HepG2 (cell line): ENCODE measurements at regions of chr4 and their contacts with region 1.

Region 1: GRCh38 chr4:52369649-52370048 is 289.5 kb downstream of the USP46 start:
- DNase-seq: peak; percentile 97
- ATAC-seq: peak; percentile 95
- H3K4me3 ChIP-seq: no peak overlapping the region
- H3K27ac ChIP-seq: peak overlapping the region; percentile 64
- H3K4me1 ChIP-seq: peaks cover 37% of the 10 kb centered on the region
- H3K27me3 ChIP-seq: no peaks in the 10 kb centered on the region
- CTCF ChIP-seq: no peak
- EP300 ChIP-seq: peak in 1 of 2 experiments; percentile 85; a peak in 2 of 4 replicates
- POLR2A ChIP-seq: no peak
- RAD21 ChIP-seq: no peak

Region 2: GRCh38 chr4:52659001-52659721 is 289.5 kb after region 1 on chr4 and contains the start of gene USP46:
- CTCF ChIA-PET with region 1: no interaction called
- POLR2A ChIA-PET with region 1: interaction called, 5 read pairs
- in situ Hi-C with region 1: loop called (anchors 10 kb)
- intact Hi-C with region 1: loop called (anchors 2 kb)
- DNase-seq: peak; percentile 44
- ATAC-seq: peak; percentile 92
- H3K4me3 ChIP-seq: peak within 1 kb of the TSS; percentile 69 to 87 (median 79)
- H3K27ac ChIP-seq: peak within 1 kb of the TSS; percentile 78
- H3K4me1 ChIP-seq: peaks cover 43% of the 10 kb centered on the region
- H3K27me3 ChIP-seq: no peaks in the 10 kb centered on the region; a peak in 1 of 5 replicates
- CTCF ChIP-seq: 0 out of 2 replicates have a peak, but pooled peaks have one; percentile 9
- EP300 ChIP-seq: no peak
- POLR2A ChIP-seq: peak; percentile 51 to 55
- RAD21 ChIP-seq: no peak
- total RNA-seq, gene USP46: 17.4 and 26.4 TPM in 2 replicates

Region 3: DNA sequence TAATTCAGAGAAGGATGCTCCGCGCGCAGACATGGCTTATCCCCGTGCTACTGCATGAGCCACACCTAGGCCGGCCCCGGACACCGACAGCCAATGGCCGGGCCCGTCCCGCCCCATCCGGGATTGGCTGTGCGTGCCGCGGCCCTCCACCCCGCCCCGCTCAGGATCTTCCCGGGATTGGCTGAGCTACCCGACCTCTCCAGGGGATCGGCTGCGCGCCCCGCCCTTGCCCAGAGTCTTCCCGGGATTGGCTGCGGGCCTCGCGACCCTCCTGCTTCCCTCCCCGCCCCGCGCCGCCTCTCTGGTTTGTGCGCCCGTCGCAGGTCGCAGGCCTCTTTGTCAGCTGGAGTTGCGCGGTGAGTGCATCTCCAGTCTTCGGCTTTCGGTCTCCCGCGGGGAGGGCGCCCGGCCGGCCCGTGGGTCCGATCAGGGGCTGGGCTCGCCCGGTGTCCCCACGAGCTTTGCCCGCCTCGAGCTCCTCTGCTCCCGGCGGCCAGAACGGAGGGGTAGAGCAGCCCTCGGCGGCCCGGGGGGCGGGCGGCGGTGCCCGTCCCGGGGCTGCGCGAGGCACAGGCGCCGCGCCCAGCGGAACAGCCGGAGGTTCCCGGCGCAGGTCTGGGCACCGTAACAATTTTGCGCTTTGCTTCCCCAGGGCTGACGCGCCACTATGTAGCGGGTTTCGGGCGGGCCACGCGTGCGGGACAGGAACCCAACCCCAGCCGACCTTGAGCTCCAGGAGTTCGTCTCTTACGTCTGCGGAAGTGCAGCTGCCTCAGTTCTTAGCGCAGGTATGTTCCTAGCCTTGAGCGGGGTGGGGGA is 342.7 kb after region 1 on chr4:
- CTCF ChIA-PET with region 1: no interaction called
- POLR2A ChIA-PET with region 1: interaction called, 23 read pairs
- in situ Hi-C with region 1: loop called (anchors 5 kb)
- intact Hi-C with region 1: loop called (anchors 2 kb)
- DNase-seq: peak; percentile 92
- ATAC-seq: peak; percentile 96
- H3K4me3 ChIP-seq: peak overlapping the region; percentile 76 to 83 (median 83)
- H3K27ac ChIP-seq: peak overlapping the region; percentile 91
- H3K4me1 ChIP-seq: peaks cover 45% of the 10 kb centered on the region
- H3K27me3 ChIP-seq: peaks cover 0 to 1% of the 10 kb centered on the region in 2 experiments; a peak in 1 of 5 replicates
- CTCF ChIP-seq: no peak
- EP300 ChIP-seq: no peak; a peak in 1 of 4 replicates
- POLR2A ChIP-seq: peak; percentile 92 to 93
- RAD21 ChIP-seq: peak; percentile 66; the same call in 1 of the 2 replicates